Esophagus muscularis mucosa (tissue), 4 donors: ENCODE measurements at regions of chr1 and their contacts with region 1.

Region 1: DNA sequence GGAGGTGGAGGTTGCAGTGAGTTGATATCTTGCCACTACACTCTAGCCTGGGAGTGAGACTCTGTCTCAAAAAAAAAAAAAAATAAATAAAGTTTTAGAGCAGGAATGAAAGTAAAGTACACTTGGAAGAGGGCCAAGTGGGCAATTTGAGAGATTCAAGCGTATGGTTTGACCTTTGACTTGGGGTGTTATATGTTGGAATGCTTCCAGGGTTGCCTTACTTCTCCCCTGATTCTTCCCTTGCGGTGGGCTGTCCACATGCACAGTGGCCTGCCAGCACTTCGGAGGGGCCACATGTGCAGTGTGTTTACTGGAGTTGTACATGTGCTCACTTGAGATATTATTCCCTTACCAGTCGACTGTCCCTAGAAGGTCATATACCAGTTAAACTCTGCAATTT is 295.5 kb upstream of the PROX1 start:
- DNase-seq: no peak
- H3K4me3 ChIP-seq: no peak overlapping the region
- H3K27ac ChIP-seq: no peak overlapping the region
- H3K4me1 ChIP-seq: no peaks in the 10 kb centered on the region
- H3K27me3 ChIP-seq: no peaks in the 10 kb centered on the region
- CTCF ChIP-seq: no peak
- EP300 ChIP-seq: no peak
- POLR2A ChIP-seq: no peak

Region 2: DNA sequence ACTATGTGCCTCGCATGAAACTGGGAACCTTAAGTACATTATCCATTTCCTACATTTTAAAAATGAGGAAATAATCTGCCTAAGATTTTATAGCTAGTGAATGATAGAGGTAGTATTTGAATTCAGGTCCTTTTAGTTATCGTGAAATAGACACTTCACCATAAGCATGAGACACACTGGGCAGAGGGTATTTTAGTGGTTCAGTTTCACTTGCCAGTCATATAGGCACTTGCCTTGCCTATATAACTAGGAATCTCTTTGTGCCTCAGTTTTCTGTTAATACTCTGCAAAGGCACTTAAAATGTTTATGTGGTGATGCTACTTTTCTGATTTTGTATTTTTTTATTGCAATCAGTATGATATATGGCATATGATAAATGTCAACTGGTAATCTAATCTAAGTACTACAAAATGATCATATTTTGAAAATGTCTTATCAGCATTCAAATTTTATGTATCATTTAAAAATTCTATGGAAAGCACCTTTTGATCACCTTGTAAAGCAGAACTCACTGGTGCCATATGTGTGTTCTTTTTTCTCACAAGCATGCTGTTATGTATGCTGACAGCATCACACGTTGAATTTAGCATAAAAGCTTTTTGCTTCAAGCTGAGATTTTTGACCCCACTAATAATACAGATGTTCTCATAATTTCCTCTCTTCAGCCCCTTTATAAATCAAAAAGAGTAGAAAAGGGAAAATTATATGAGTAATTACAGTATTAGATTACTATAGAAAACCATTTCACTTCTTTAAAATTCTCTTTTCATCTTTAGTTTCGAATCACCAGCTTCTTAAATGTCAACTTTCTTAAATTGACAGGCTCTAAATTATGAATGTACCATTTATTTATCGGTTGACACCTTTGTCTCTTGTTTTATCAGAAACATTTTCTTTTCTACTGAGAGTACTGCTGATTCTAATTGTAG is 588.7 kb before region 1 on chr1:
- intact Hi-C with region 1: no loop called
- DNase-seq: no peak
- H3K4me3 ChIP-seq: no peak overlapping the region
- H3K27ac ChIP-seq: no peak overlapping the region
- H3K4me1 ChIP-seq: peaks cover 0 to 8% (median 0%) of the 10 kb centered on the region in 4 donors
- H3K27me3 ChIP-seq: no peaks in the 10 kb centered on the region
- CTCF ChIP-seq: no peak
- EP300 ChIP-seq: no peak
- POLR2A ChIP-seq: no peak

Region 3: GRCh38 chr1:213415671-213416380 is 276.5 kb before region 1 on chr1:
- intact Hi-C with region 1: no loop called
- DNase-seq: peak; percentile 90
- H3K4me3 ChIP-seq: no peak overlapping the region
- H3K27ac ChIP-seq: no peak overlapping the region
- H3K4me1 ChIP-seq: no peaks in the 10 kb centered on the region
- H3K27me3 ChIP-seq: no peaks in the 10 kb centered on the region
- CTCF ChIP-seq: no peak
- EP300 ChIP-seq: no peak
- POLR2A ChIP-seq: no peak

Region 4: DNA sequence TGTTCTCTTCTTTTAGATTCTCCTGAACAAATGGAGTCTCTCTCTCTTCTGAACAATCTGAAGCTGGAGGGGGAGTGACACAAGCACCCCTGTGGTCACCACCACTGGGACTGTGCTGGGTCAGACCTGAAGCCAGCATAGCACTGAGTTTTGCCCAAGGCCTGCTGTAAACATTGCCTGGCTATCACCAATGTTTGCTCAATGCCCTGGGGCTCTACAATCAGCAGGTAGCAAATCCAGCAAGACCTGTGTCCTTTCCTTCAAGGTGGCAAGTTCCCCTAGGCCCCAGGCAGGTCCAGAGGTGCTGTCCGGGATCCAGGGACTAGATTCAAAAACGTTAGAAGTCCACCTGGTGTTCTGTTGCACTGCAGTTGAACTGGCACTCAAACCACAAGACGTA is 12.6 kb after region 1 on chr1:
- intact Hi-C with region 1: loop called (anchors 1 kb)
- DNase-seq: no peak
- H3K4me3 ChIP-seq: no peak overlapping the region
- H3K27ac ChIP-seq: no peak overlapping the region
- H3K4me1 ChIP-seq: no peaks in the 10 kb centered on the region
- H3K27me3 ChIP-seq: no peaks in the 10 kb centered on the region
- CTCF ChIP-seq: no peak
- EP300 ChIP-seq: no peak
- POLR2A ChIP-seq: no peak